A673 (cell line): ENCODE measurements at regions of chr12 and their contacts with region 1.

Region 1: GRCh38 chr12:84502907-84503787 is 409.5 kb downstream of the SLC6A15 start:
- DNase-seq: peak; percentile 74
- H3K4me3 ChIP-seq: no peak overlapping the region
- H3K27ac ChIP-seq: no peak overlapping the region
- H3K4me1 ChIP-seq: peaks cover under 1% of the 10 kb centered on the region
- H3K27me3 ChIP-seq: no peaks in the 10 kb centered on the region
- CTCF ChIP-seq: peak; percentile 76

Region 2: DNA sequence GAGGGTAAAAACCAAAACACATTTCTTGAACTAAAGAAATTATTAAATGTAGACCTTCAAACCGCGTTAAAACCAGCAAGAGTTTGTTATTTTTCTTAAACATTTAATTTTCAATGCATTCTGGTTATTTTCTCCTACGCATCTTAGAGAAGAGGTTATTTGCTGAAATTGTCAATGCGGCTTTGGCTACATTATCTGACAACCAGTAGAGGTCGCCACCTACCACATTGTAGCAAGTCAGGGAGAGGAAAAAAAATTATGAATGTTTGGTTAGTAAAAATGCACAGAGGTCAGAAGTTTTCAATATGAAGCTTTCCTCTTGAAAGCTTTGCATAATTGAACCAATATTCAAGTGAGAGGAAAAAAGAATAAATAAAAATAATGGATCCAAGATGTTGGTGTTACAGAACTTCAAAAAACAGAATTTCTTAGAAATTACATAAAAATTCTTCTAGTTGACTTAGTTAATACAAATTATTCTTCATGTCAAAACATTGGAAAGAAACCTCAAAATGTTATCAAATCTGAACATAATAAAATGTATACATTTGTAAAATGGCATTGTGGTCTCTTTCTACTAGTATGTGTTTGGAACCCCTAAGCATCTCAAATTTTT is 1975.9 kb before region 1 on chr12:
- CTCF ChIA-PET with region 1: no interaction called
- POLR2A ChIA-PET with region 1: no interaction called
- intact Hi-C with region 1: loop called (anchors 5 kb)
- DNase-seq: peak; percentile 61
- H3K4me3 ChIP-seq: no peak overlapping the region
- H3K27ac ChIP-seq: no peak overlapping the region
- H3K4me1 ChIP-seq: no peaks in the 10 kb centered on the region
- H3K27me3 ChIP-seq: peaks cover 8% of the 10 kb centered on the region
- CTCF ChIP-seq: peak; percentile 90